A549 (cell line): ENCODE measurements at regions of chr17 and their contacts with region 1.

Region 1: DNA sequence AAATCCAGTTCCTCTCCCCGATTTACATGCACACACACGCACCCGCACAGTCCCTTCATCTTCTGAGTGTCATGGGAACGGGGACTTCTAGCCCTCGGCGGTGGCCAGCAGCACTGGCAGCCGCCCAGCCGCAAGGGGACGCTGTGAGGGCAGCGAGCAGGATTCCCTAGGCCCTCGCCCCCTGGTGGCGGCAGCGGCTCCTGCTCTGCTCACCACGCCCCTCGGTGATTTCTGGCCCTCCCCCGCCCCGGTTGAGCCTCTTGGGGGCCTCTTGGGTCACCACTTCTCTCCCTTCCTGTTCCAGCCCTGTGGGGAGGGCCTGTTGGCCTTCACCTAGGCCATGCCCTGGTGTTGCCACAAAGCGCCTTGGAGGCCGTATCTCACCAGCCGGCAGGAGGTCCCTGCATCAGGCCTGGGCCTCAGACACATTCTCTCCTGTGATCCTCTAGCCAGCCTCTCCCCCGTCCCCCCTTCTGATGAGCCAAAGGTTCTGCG is 75.2 kb upstream of the KSR1 start:
- DNase-seq: peak; percentile 78 to 90
- ATAC-seq: peak; percentile 73 to 92
- H3K4me3 ChIP-seq: no peak overlapping the region; the same call in 2 of the 3 replicates
- H3K27ac ChIP-seq: peak overlapping the region in 1 of 2 experiments; percentile 71; a peak in 3 of 6 replicates
- H3K4me1 ChIP-seq: peaks cover 33% of the 10 kb centered on the region
- CTCF ChIP-seq: peak; percentile 96
- EP300 ChIP-seq: no peak
- POLR2A ChIP-seq: no peak
- RAD21 ChIP-seq: peak; percentile 62 to 66

Region 2: GRCh38 chr17:27324771-27325339 is 56.2 kb before region 1 on chr17:
- CTCF ChIA-PET with region 1: no interaction called
- POLR2A ChIA-PET with region 1: no interaction called
- DNase-seq: no peak
- ATAC-seq: peak in 1 of 2 experiments; percentile 9; a peak in 2 of 6 replicates
- H3K4me3 ChIP-seq: no peak overlapping the region
- H3K27ac ChIP-seq: no peak overlapping the region
- H3K4me1 ChIP-seq: peaks cover 11% of the 10 kb centered on the region; the same call in 2 of the 3 replicates
- CTCF ChIP-seq: no peak
- EP300 ChIP-seq: no peak
- POLR2A ChIP-seq: no peak
- RAD21 ChIP-seq: no peak

Region 3: DNA sequence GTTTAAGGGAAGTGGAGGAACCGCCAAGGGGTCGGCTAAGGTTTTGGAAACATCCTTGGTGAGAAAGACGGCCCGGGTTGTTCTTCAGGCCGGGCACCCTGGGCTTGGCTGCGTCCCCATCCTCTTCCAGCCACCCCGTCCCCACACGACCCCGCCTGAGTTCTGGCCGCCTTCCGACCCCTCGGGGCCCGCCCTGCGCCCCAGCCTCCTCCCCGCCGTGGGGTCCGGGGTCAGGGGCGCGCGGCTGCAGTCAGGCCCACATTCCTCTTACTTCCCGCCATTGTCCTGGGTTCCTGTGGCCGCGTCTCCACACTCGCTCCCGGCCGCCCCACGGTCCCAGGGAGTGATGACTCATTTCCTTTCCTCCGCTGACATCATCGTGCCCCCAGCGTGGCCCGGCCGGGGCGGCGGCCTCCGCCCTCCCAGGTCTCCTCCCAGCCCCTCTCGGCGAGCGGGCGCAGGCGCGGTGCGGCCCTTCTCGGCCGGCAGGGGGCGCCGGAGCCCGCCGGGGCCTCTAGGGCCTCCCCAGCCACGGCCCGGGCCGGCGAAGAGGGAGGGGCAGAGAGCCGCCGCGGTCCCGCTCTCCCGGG is 27.5 kb before region 1 on chr17:
- CTCF ChIA-PET with region 1: interaction called, 39 read pairs
- POLR2A ChIA-PET with region 1: interaction called, 5 read pairs
- DNase-seq: peak; percentile 96 to 97
- ATAC-seq: peak; percentile 85 to 93
- H3K4me3 ChIP-seq: peak overlapping the region; percentile 59
- H3K27ac ChIP-seq: peak overlapping the region; percentile 90 to 99
- H3K4me1 ChIP-seq: peaks cover 25% of the 10 kb centered on the region
- CTCF ChIP-seq: peak; percentile 99
- EP300 ChIP-seq: peak; percentile 49 to 64; a peak in 2 of 5 replicates
- POLR2A ChIP-seq: peak; percentile 81
- RAD21 ChIP-seq: peak; percentile 67 to 99

Region 4: DNA sequence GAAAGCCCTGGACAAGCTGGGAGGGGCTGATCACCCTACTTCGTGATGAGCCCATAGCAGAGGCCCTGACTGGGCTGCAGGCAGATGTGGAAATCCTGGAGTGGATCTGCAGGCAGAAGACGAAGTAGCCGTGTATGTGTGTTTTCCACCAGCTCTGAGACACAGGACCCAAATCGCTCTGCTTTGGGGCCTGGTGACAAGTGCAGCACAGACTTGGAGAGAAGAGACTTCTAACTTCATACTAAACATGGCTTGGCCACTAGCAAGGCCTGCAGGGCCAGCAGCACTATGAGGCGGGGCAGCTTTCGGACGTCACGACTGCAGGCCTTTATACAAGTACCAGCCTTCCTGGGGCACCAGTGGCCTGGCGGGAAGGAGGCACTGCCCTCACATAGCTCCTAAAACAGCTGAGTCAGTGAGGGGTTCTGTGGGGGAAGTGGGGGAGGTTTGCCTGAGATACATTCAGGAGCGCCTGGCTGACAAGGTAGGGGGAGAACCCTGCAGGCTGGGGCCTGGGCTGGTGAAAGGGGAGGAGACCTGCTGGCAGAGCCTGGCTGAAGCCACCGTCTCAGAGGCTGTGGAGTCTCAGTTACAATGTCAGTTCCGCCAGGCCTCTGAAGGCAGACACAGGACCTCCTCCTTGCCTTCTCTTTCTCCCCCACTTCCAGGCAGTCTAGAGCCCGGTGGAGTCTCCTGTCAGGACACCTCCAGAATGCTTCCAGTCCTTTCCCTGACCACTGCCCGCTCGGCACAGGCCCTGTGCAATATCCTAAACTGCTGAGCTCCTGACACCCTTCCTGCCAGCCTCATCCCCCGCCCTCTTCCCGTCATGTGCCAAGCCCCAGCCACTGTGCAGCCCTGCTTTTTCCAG is 13.7 kb before region 1 on chr17:
- CTCF ChIA-PET with region 1: interaction called, 58 read pairs
- POLR2A ChIA-PET with region 1: no interaction called
- DNase-seq: no peak
- ATAC-seq: peak in 1 of 2 experiments; percentile 19; a peak in 1 of 6 replicates
- H3K4me3 ChIP-seq: no peak overlapping the region
- H3K27ac ChIP-seq: peak overlapping the region in 1 of 2 experiments; percentile 33; a peak in 1 of 6 replicates
- H3K4me1 ChIP-seq: peaks cover 11% of the 10 kb centered on the region; the same call in 2 of the 3 replicates
- CTCF ChIP-seq: no peak
- EP300 ChIP-seq: no peak
- POLR2A ChIP-seq: no peak
- RAD21 ChIP-seq: no peak

Region 5: GRCh38 chr17:27407916-27408846 is 27.1 kb after region 1 on chr17:
- CTCF ChIA-PET with region 1: interaction called, 42 read pairs
- POLR2A ChIA-PET with region 1: interaction called, 6 read pairs
- DNase-seq: peak; percentile 33 to 62
- ATAC-seq: peak; percentile 69 to 88
- H3K4me3 ChIP-seq: no peak overlapping the region
- H3K27ac ChIP-seq: peak overlapping the region; percentile 56 to 59
- H3K4me1 ChIP-seq: peaks cover 32% of the 10 kb centered on the region
- CTCF ChIP-seq: no peak; the same call in 2 of the 3 replicates
- EP300 ChIP-seq: no peak
- POLR2A ChIP-seq: no peak
- RAD21 ChIP-seq: no peak; a peak in 1 of 5 replicates

Region 6: GRCh38 chr17:27430882-27431491 is 49.9 kb after region 1 on chr17:
- CTCF ChIA-PET with region 1: interaction called, 36 read pairs
- POLR2A ChIA-PET with region 1: no interaction called
- DNase-seq: peak; percentile 45 to 67
- ATAC-seq: peak; percentile 94 to 98
- H3K4me3 ChIP-seq: no peak overlapping the region
- H3K27ac ChIP-seq: no peak overlapping the region
- H3K4me1 ChIP-seq: no peaks in the 10 kb centered on the region
- CTCF ChIP-seq: peak; percentile 60
- EP300 ChIP-seq: no peak
- POLR2A ChIP-seq: no peak
- RAD21 ChIP-seq: peak; percentile 74

Region 7: DNA sequence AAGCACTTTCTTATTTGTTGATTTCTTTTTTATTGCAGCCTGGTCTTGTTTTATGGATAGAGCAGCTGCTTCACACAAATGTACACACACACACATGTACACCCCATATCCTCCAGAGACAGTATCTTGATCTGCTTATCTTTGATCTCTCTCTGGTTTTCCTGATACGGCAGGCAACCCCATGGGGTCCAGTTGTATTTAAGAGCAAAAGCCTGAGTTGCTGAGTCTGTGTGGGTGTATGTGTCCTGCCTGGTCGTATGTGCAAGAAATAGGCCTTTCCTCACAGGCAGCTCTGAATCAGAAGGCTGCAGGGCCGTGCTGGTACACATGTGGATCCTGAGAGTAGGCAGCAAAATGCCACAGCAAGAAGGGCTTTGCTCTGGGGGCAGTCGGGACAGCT is 235.4 kb after region 1 on chr17:
- CTCF ChIA-PET with region 1: no interaction called
- POLR2A ChIA-PET with region 1: no interaction called
- DNase-seq: no peak
- ATAC-seq: no peak
- H3K4me3 ChIP-seq: no peak overlapping the region
- H3K27ac ChIP-seq: no peak overlapping the region
- H3K4me1 ChIP-seq: no peaks in the 10 kb centered on the region
- CTCF ChIP-seq: no peak
- EP300 ChIP-seq: no peak
- POLR2A ChIP-seq: no peak
- RAD21 ChIP-seq: no peak